Breast epithelium (tissue), 4 donors: ENCODE measurements at regions of chr5 and their contacts with region 1.

Region 1: GRCh38 chr5:119529811-119530483 is 77.7 kb downstream of the HSD17B4 start:
- DNase-seq: no peak
- H3K4me3 ChIP-seq: no peak overlapping the region
- H3K27ac ChIP-seq: no peak overlapping the region
- H3K4me1 ChIP-seq: no peaks in the 10 kb centered on the region
- H3K27me3 ChIP-seq: no peaks in the 10 kb centered on the region
- CTCF ChIP-seq: no peak
- POLR2A ChIP-seq: no peak

Region 2: DNA sequence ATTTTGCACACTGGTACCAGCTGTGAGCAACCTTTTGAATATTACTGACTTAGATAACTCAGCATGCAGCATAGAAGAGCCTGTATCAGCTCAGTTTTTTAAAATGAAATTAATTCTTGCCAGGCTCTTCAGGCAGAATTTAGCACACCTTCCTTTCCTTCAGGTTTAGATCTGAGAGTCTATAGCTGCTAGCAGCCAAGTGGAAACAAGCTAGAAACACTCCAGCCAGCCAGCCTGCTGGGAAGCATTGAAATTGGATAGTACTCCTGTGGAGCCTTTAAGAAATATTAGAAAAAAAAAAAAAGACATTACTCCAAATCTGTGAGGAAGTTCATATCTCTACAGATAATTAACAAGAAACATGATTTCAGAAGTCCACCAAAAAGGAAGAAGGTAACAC is 1353.8 kb before region 1 on chr5:
- intact Hi-C with region 1: no loop called
- DNase-seq: no peak
- H3K4me3 ChIP-seq: no peak overlapping the region
- H3K27ac ChIP-seq: no peak overlapping the region
- H3K4me1 ChIP-seq: no peaks in the 10 kb centered on the region
- H3K27me3 ChIP-seq: no peaks in the 10 kb centered on the region
- CTCF ChIP-seq: no peak
- POLR2A ChIP-seq: no peak

Region 3: DNA sequence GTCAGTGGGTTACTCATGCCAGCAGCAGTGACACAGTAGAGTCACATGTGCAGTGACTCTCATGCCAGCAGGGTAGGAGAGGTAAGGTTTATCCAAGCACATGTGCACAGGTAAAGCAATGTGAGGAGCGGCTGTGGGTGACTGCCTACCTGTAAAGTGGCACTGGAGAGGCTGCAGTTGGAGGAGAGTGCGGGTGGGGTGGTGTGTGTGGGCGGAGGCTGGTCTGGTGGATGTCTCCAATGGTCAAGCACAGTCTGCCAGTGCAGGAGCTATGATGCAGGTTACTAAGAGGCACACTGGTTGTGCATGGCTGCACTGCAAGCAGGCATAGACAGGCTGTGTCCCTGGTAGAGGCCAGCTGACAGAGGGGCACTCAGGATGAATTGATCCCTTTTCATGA is 1733.5 kb after region 1 on chr5:
- intact Hi-C with region 1: loop called (anchors 5 kb)
- DNase-seq: no peak
- H3K4me3 ChIP-seq: no peak overlapping the region
- H3K27ac ChIP-seq: no peak overlapping the region
- H3K4me1 ChIP-seq: no peaks in the 10 kb centered on the region
- H3K27me3 ChIP-seq: no peaks in the 10 kb centered on the region
- CTCF ChIP-seq: no peak
- POLR2A ChIP-seq: no peak